ENCODE measurements at regions of chr12 and their contacts with region 1.

Region 1: DNA sequence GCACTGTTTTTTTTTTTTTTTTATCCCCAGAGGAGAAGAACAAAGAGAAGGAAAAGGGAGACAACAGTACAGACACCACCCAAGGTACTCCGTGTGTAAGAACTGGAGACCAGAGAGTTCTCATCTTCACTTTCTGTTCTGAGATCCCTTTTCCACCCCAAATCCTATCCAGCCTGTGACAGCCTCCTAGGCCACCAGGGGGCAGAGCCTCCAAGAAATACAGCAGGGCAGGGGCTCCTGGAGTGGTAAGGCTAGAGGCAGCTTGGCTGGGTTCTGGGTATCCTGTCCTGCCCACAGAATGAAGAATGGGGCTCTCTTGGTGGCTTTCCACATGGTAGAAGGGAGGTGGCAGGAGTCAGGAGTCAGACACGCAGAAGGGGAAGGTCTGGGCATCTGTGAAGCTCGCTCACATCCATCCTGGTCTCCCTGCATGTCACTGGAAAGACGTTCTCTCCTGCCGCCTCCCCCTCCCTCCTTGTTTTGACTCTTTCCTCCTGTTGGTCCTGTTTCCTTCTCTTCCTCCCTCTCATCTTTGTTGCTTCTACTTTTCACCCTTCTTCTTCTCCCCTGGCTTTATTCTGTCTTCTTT is 12.0 kb downstream of the CLSTN3 start:
- DNase-seq: peak; percentile 18
- ATAC-seq: peak; percentile 88
- H3K4me3 ChIP-seq: no peak overlapping the region
- H3K27ac ChIP-seq: no peak overlapping the region
- H3K4me1 ChIP-seq: no peaks in the 10 kb centered on the region
- H3K27me3 ChIP-seq: no peaks in the 10 kb centered on the region
- CTCF ChIP-seq: peak; percentile 81

Region 2: DNA sequence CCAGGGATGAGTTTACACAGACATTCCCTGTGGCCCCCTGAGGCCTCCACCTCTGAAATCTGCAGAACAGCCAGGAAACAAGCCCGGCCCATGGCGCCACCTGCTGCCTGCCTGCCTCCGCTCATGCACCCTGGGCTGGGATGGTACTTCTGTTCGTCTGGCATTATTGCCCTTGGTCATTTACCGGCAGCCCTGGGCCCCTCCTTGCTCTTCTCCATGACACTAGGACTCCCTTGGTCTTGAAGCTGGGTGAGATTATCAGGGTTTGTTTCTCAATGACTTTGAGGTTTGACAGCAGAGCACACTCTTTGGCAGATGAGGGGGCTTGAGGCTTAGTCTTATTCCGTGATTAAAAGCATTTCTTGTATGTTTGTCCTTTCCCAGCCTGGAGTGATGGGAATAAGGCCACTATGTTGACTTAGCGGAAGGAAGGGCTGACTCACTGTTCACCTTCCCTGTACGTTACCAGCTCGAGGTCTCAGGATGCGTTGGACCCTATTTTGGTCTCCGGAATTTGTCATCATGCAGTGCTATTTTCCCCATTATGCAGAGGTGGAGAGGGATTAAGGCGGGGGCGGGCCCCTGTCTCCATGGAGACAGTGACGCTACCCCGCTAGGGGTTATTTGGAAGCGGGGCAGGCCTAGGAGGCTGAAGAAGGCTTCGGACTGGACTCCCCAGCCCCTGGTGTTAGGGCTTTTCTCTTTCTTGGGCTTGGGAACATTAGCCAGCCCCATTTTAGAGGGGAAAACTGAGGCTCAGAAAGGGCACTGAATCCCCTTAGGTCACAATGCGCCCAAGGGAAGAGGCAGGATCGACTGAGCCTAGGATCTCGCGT is 46.6 kb after region 1 on chr12:
- CTCF ChIA-PET with region 1: interaction called, 4 read pairs
- POLR2A ChIA-PET with region 1: no interaction called
- in situ Hi-C with region 1: no loop called
- intact Hi-C with region 1: loop called (anchors 5 kb)
- DNase-seq: peak; percentile 24
- ATAC-seq: peak; percentile 79
- H3K4me3 ChIP-seq: peak overlapping the region; percentile 74 to 95
- H3K27ac ChIP-seq: peak overlapping the region; percentile 87
- H3K4me1 ChIP-seq: peaks cover 2% of the 10 kb centered on the region; the same call in 1 of the 2 replicates
- H3K27me3 ChIP-seq: no peaks in the 10 kb centered on the region
- CTCF ChIP-seq: peak; percentile 84

Region 3: DNA sequence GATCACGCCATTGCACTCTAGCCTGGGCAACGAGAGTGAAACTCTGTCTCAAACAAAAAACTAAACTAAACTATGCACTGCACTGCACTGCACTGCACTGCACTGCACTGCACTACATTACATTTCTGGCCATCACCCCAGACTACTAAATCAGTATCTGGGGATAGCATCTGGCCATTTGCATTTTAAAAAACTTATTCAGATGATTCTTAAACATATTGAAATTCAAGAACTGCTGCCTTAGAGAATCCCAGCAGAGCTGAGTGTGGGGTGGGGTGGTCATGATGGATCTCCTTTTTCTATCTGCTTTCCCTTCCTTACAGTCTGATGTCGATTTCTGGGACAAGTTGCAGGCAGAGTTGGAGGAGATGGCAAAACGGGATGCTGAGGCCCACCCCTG is 61.0 kb after region 1 on chr12:
- CTCF ChIA-PET with region 1: no interaction called
- POLR2A ChIA-PET with region 1: no interaction called
- in situ Hi-C with region 1: no loop called
- intact Hi-C with region 1: no loop called
- DNase-seq: no peak
- ATAC-seq: no peak
- H3K4me3 ChIP-seq: no peak overlapping the region
- H3K27ac ChIP-seq: no peak overlapping the region
- H3K4me1 ChIP-seq: no peaks in the 10 kb centered on the region
- H3K27me3 ChIP-seq: no peaks in the 10 kb centered on the region
- CTCF ChIP-seq: no peak

Region 4: DNA sequence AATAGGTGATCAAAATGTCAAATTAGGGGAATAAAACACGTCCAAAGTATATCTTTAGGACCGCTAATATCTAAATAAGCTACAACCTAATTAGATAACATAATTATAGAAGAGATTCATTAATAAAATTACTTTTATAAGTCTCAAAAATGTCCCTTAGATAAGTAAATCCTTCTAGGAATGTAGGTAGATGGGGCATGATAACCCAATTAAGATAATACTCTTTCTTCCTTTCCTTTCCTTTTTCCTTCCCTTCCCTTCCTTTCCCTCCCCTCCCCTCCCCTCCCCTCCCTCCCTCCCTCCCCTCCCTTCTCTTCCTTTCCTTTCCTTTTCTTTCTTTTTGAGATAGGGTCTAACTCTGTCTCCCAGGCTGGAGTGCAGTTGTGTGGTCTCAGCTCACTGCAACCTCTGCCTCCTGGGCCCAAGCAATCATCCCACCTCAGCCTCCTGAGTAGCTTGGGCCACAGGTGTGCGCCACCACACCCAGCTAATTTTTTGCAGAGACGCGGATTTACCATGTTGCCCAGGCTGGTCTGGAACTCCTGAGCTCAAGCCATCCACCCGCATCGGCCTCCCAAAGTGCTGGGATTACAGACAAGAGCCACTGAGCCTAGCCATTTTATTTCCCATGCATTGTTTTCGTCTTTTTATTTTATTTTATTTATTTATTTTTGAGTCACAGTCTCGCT is 805.0 kb after region 1 on chr12:
- CTCF ChIA-PET with region 1: no interaction called
- POLR2A ChIA-PET with region 1: interaction called, 15 read pairs
- in situ Hi-C with region 1: no loop called
- intact Hi-C with region 1: no loop called
- DNase-seq: no peak
- ATAC-seq: no peak
- H3K4me3 ChIP-seq: no peak overlapping the region
- H3K27ac ChIP-seq: no peak overlapping the region
- H3K4me1 ChIP-seq: no peaks in the 10 kb centered on the region
- H3K27me3 ChIP-seq: no peaks in the 10 kb centered on the region
- CTCF ChIP-seq: no peak